CD4-positive, alpha-beta memory T cell (primary cell): ENCODE measurements at regions of chr3 and their contacts with region 1.

Region 1: GRCh38 chr3:15797642-15798303 is at the start of gene ANKRD28:
- DNase-seq: peak in 4 of 5 donors; percentile 45 to 61 (median 52)
- H3K4me3 ChIP-seq: peak within 1 kb of the TSS; percentile 35 to 38
- H3K4me3 Mint-ChIP-seq: peak within 1 kb of the TSS; percentile 81 to 93 (median 91)
- H3K27ac ChIP-seq: peak within 1 kb of the TSS; percentile 72
- H3K27ac Mint-ChIP-seq: peak within 1 kb of the TSS; percentile 88 to 98 (median 95)
- H3K4me1 ChIP-seq: peaks cover 86% of the 10 kb centered on the region
- H3K4me1 Mint-ChIP-seq: peaks cover 49 to 92% (median 67%) of the 10 kb centered on the region in 4 donors
- H3K27me3 ChIP-seq: no peaks in the 10 kb centered on the region
- H3K27me3 Mint-ChIP-seq: no peaks in the 10 kb centered on the region
- total RNA-seq, gene ANKRD28: 35.9 to 42.0 TPM

Region 2: DNA sequence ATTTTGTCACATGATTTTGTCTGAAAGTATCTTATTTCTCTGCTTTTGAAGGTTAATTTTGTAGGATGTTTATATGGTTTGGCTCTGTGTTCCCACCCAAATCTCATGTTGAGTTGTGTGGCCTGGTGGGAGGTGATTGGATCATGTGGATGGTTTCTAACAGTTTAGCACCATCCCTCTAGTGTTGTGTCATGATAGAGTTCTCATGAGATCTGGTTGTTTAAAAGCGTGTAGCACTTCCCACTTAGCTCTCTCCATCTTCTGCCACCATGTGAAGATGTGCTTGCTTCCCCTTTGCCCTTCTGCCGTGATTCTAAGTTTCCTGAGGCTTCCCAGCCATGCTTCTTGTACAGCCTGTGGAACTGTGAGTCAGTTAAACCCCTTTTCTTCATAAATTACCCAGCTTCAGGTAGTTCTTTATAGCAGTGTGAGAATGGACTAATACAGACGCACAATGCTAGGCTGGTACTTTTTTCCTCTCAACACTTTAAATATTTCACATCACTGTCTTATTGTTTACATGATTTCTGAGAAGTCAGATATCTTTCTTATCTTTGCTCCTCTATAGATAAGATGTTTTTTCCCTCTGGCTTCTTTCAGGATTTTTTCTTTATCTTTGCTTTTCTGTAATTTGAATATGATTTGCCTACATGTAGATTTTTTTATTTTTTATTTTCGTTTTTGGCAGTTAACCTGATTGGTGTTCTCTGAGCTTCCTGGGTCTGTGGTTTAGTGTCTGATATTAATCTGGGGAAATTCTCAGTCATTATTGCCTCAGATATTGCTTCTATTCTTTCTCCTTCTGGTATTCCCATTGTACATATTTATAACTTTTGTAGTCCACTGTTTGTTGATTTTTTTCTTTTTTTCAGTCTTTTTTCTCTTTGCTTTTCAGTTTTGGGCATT is 174.0 kb before region 1 on chr3:
- CTCF ChIA-PET with region 1: interaction called, 10 read pairs
- POLR2A ChIA-PET with region 1: interaction called, 3 read pairs
- intact Hi-C with region 1: no loop called
- DNase-seq: peak in 4 of 5 donors; percentile 45 to 65 (median 54)
- H3K4me3 ChIP-seq: peak overlapping the region; percentile 12 to 34
- H3K4me3 Mint-ChIP-seq: peak overlapping the region; percentile 83 to 90 (median 86)
- H3K27ac ChIP-seq: peak overlapping the region; percentile 55
- H3K27ac Mint-ChIP-seq: peak overlapping the region; percentile 86 to 96 (median 95)
- H3K4me1 ChIP-seq: peaks cover 37% of the 10 kb centered on the region
- H3K4me1 Mint-ChIP-seq: peaks cover 31 to 51% (median 39%) of the 10 kb centered on the region in 4 donors
- H3K27me3 ChIP-seq: no peaks in the 10 kb centered on the region
- H3K27me3 Mint-ChIP-seq: no peaks in the 10 kb centered on the region

Region 3: DNA sequence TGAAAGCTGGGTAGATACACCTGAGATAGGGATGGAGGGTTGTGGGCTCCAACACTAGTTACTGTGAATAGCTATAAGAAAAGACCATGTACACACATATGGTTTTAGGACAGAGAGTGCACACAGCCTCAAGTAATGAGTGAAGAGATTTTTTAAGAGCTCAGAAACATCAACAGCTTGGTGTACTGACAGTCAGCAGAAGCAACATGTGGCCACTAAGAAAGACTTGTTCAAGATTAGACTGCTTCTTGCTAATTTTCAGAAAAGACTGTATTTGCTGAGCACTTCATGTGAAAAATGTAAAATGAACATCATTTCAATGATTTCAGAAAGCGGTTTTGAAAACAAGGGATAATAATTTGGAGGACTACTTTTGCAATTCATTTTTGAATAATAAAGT is 10.2 kb before region 1 on chr3:
- CTCF ChIA-PET with region 1: interaction called, 7 read pairs
- POLR2A ChIA-PET with region 1: interaction called, 11 read pairs
- intact Hi-C with region 1: no loop called
- DNase-seq: no peak
- H3K4me3 ChIP-seq: no peak overlapping the region
- H3K4me3 Mint-ChIP-seq: no peak overlapping the region
- H3K27ac ChIP-seq: no peak overlapping the region
- H3K27ac Mint-ChIP-seq: peak overlapping the region in 2 of 7 donors; percentile 38 to 52
- H3K4me1 ChIP-seq: peaks cover 15% of the 10 kb centered on the region
- H3K4me1 Mint-ChIP-seq: peaks cover 43 to 63% (median 50%) of the 10 kb centered on the region in 4 donors
- H3K27me3 ChIP-seq: no peaks in the 10 kb centered on the region
- H3K27me3 Mint-ChIP-seq: no peaks in the 10 kb centered on the region